PC-3 (cell line): ENCODE measurements at regions of chr4 and their contacts with region 1.

Region 1: GRCh38 chr4:58541926-58542325 is 1431.7 kb upstream of the IGFBP7 start:
- DNase-seq: no peak
- ATAC-seq: no peak
- H3K4me3 ChIP-seq: no peak overlapping the region
- H3K27ac ChIP-seq: no peak overlapping the region
- H3K4me1 ChIP-seq: no peaks in the 10 kb centered on the region
- H3K27me3 ChIP-seq: no peaks in the 10 kb centered on the region
- CTCF ChIP-seq: no peak

Region 2: DNA sequence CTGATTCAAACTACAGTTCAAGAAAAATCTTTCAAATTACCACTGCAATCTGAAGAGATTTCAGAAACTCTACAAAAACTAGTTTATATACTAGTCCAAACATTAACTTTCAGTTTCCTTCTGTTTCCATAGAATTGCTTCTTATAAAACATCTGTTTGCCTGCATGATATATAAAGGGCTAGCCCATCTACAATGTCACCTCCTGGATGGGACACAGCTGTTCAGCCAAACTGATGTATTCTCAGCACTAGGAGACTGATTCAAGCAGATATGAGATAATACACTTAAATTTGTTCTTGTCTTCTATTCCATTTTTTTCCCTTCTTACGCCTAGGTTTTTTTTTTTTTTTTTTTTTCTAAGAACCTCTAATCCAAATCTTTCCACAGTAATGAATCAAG is 138.0 kb after region 1 on chr4:
- CTCF ChIA-PET with region 1: no interaction called
- POLR2A ChIA-PET with region 1: interaction called, 20 read pairs
- intact Hi-C with region 1: no loop called
- DNase-seq: no peak
- ATAC-seq: no peak
- H3K4me3 ChIP-seq: no peak overlapping the region
- H3K27ac ChIP-seq: no peak overlapping the region
- H3K4me1 ChIP-seq: no peaks in the 10 kb centered on the region
- H3K27me3 ChIP-seq: no peaks in the 10 kb centered on the region
- CTCF ChIP-seq: no peak